Right lobe of liver (tissue), 6 donors: ENCODE measurements at regions of chr10 and their contacts with region 1.

Region 1: GRCh38 chr10:48976196-48976595 is 36.6 kb upstream of the LRRC18 start:
- DNase-seq: peak in 1 of 3 donors; percentile 66
- ATAC-seq: peak; percentile 74 to 97 (median 90)
- H3K4me3 ChIP-seq: no peak overlapping the region
- H3K27ac ChIP-seq: no peak overlapping the region
- H3K4me1 ChIP-seq: no peaks in the 10 kb centered on the region
- H3K27me3 ChIP-seq: no peaks in the 10 kb centered on the region
- CTCF ChIP-seq: peak; percentile 38 to 59 (median 52)
- POLR2A ChIP-seq: no peak

Region 2: GRCh38 chr10:49164559-49165188 is 188.5 kb after region 1 on chr10:
- intact Hi-C with region 1: loop called (anchors 5 kb)
- DNase-seq: peak in 2 of 3 donors; percentile 52 to 64
- ATAC-seq: peak; percentile 84 to 90 (median 86)
- H3K4me3 ChIP-seq: no peak overlapping the region
- H3K27ac ChIP-seq: no peak overlapping the region
- H3K4me1 ChIP-seq: no peaks in the 10 kb centered on the region
- H3K27me3 ChIP-seq: no peaks in the 10 kb centered on the region
- CTCF ChIP-seq: peak; percentile 68 to 77 (median 74)
- POLR2A ChIP-seq: no peak